ENCODE measurements at regions of chr17 and their contacts with region 1.

Region 1: DNA sequence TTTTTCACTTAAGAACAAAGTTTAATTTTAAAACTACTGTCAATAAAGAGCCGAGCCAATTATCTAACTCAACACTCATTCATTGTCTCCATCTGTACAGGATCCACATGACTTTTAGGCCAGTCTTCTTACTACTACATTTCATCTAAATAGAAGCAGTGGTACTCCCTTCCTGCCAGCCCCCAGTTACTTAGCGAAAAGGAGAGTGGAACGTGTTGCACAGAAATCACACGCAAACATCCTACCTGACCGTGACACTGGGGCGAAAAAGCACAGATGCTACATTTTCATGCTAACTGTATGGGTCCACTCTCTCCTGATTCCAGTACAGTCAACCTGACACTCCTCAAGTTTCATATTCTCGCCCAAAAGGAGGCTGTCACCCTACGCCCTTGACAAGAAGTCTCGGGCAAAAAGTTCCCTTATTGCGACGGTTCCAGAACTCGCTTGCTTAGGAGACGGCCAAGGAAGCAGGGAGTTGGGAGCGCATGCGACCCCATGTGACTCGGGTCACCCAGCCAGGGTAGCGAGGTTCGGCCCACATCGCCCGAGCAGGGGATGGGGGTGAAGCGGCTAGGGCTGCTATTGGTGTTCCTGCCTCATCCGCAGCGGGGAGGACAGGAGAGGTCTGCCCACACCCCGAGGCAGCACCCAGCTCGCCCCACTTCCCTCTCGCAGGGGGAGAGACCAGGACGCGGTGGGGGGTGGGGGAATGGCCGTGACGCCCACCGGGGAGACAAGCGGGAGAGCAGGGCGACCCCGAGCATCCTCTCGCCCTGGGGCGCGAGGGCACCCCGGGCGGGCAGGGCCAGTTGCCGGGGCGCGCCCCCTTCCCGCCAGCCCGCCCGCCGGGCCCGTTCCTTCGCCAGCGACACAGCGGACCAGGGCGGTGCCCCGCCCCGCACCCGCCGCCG is 935 bp downstream of the GNA13 start:
- DNase-seq: peak; percentile 53
- H3K4me3 Mint-ChIP-seq: peak overlapping the region; percentile 94
- H3K27ac Mint-ChIP-seq: peak overlapping the region; percentile 93
- H3K4me1 Mint-ChIP-seq: peaks cover 32% of the 10 kb centered on the region
- H3K27me3 Mint-ChIP-seq: peaks cover 5% of the 10 kb centered on the region

Region 2: DNA sequence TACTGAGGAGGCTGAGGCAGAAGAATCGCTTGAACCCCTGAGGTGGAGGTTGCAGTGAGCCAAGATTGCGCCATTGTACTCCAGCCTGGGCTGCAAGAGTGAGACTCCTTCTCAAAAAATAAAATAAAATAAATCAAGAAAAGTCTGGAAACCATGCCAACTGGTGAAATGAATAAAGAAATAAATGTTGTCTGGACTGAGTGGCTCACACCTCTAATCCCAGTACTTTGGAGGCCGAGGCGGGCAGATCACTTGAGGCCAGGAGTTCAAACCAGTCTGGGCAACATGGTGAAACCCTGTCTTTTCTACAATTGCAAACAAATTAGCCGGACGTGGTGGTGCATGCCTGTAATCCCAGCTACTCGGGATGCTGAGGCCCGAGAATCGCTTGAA is 135.6 kb before region 1 on chr17:
- intact Hi-C with region 1: loop called (anchors 2 kb)
- DNase-seq: no peak
- H3K4me3 Mint-ChIP-seq: peak overlapping the region; percentile 89
- H3K27ac Mint-ChIP-seq: peak overlapping the region; percentile 87
- H3K4me1 Mint-ChIP-seq: peaks cover 21% of the 10 kb centered on the region
- H3K27me3 Mint-ChIP-seq: peaks cover 2% of the 10 kb centered on the region

Region 3: DNA sequence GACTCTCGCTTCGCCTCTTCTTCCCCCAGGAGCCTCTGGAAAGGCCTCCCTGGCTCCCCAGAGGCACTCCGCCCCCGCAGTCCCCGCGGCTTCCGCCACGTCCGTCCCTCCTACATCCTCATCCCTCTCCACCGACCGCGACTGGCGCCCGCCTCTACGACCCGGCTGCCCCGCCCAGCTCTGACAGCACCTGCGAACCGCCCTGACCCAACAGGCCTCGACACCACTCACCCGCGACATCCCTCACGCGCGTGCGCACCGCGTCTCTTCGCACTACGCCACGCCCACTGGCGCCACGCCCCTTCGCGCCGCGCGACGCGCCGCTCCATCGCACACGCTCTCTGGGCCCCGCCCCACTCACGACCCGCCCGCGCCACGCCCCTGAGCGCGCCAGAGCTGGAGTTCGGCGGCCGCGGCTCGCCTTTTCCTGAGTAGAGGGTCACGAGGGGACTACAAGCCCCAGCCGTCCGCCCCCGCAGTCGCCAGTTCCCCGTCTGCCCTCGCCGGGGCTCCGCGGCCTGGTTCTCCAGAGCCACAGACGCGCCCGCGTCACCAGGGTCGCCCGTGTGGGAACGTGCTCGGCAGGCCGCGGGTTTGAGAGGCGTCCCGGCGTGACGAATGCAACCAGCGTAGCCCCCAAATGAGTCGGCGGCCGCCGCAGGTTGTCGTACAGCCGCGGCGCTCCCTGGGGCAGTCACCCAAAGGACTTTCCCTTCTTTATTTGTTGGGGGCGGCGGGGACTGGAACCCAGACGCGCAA is 80.1 kb before region 1 on chr17:
- intact Hi-C with region 1: loop called (anchors 1 kb)
- DNase-seq: peak; percentile 98
- H3K4me3 Mint-ChIP-seq: peak overlapping the region; percentile 74
- H3K27ac Mint-ChIP-seq: peak overlapping the region; percentile 99
- H3K4me1 Mint-ChIP-seq: peaks cover 60% of the 10 kb centered on the region
- H3K27me3 Mint-ChIP-seq: no peaks in the 10 kb centered on the region

Region 4: DNA sequence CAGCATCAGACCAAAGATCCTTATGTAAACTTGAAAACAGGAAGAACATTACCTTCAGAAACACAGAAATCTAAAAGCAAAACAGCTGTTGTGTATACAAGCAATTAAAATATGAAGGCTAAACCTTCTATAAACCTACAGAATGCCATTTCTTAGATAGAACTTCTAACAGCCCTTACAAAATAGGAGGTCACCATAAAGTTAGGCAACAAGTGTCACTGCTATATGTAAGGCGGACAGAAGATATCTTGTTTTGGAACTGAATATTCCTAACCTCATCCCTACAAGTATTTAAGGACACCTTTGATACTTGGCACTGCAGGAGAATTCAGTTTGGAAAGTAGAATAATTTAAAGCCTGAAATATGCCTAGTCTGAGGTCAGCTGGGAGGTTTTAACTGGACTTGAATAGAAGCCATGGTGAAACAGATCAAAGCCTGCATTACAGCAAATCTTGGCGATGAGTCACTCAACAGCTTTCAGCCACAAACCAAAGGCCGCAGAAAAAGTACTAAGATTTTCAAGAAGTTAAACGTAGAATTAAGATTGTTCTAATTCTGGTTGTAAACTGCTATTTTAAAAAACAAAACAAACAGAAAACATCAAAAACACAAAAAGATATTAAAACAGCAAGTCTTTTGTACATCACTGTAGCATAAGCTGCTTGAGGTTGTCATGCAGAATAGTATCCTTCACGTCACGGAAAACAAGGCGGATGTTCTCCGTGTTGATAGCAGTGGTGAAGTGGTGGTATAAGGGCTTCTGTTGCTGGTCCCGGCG is 41.8 kb before region 1 on chr17:
- intact Hi-C with region 1: loop called (anchors 2 kb)
- DNase-seq: peak; percentile 13
- H3K4me3 Mint-ChIP-seq: no peak overlapping the region
- H3K27ac Mint-ChIP-seq: peak overlapping the region; percentile 43
- H3K4me1 Mint-ChIP-seq: peaks cover 65% of the 10 kb centered on the region
- H3K27me3 Mint-ChIP-seq: no peaks in the 10 kb centered on the region

Region 5: GRCh38 chr17:65039336-65039988 is 16.1 kb before region 1 on chr17:
- intact Hi-C with region 1: loop called (anchors 1 kb)
- DNase-seq: peak; percentile 46
- H3K4me3 Mint-ChIP-seq: peak overlapping the region; percentile 58
- H3K27ac Mint-ChIP-seq: peak overlapping the region; percentile 82
- H3K4me1 Mint-ChIP-seq: peaks cover 78% of the 10 kb centered on the region
- H3K27me3 Mint-ChIP-seq: no peaks in the 10 kb centered on the region

Region 6: DNA sequence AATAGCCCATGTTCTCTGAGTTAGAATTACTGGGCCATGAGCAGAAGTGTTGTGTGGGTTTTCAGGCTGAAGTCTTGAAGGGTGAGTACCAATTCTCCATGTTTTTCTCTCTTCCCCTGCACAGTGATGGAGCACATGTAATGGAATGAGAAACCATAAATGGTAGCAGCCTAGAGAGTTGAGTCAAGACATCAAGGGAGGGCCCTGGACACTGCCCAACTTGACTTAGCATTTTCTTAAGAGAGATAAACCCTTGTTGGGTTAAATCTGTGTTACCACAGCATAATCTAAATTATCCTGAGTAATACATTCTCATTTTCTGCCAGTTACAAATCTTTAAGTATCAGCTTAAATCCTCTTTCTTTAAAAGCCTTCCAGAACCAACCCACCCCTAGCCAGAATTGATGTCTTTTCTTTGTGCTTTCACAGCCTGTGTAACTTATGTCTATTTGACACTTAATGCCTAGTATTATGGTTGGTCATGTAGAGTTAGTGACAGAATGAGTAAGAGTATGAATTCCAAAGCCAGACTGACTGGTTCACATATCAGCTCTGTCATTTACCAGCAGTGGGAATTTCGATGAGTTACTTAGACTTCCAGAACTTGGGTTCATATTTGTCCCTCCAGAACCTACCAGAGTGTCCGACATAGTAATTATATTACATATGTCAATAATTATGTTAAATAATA is 54.5 kb after region 1 on chr17:
- intact Hi-C with region 1: no loop called
- DNase-seq: no peak
- H3K4me3 Mint-ChIP-seq: no peak overlapping the region
- H3K27ac Mint-ChIP-seq: no peak overlapping the region
- H3K4me1 Mint-ChIP-seq: no peaks in the 10 kb centered on the region
- H3K27me3 Mint-ChIP-seq: peaks cover 20% of the 10 kb centered on the region

Region 7: GRCh38 chr17:65198653-65199382 is 143.2 kb after region 1 on chr17:
- intact Hi-C with region 1: loop called (anchors 1 kb)
- DNase-seq: no peak
- H3K4me3 Mint-ChIP-seq: no peak overlapping the region
- H3K27ac Mint-ChIP-seq: peak overlapping the region; percentile 9
- H3K4me1 Mint-ChIP-seq: peaks cover 14% of the 10 kb centered on the region
- H3K27me3 Mint-ChIP-seq: peaks cover 6% of the 10 kb centered on the region